HAP-1 (cell line): ENCODE measurements at regions of chr3 and their contacts with region 1.

Region 1: DNA sequence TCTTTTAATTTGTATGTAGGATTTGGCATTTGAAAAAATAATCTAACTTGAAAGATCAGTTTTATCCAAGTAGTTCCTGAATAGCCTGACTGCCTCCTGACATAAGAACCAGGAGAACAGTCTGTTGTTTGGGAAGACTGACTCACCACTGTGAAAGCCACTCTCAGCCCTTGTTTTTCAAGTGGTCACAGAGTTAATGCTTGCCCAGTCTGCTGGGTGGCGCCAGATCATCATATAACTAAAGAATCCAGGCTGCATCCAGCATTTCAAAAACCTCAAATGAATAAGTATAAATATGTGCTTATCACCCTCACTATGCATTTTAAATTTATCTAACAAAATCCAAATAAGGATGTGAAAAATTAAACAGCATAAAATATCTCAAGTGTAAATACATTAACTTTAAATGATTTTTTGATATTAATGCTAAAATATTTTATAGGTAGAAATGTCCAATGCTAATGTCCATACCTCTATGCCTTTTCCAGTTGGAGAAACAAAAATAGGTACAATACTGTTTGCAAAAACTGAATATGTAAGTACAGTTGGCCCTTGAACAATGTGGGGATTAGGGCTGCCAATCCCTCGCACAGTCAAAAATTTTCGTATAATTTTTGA is 26.9 kb upstream of the ZBBX start:
- DNase-seq: peak; percentile 39 to 62
- H3K4me3 ChIP-seq: no peak overlapping the region
- H3K4me1 ChIP-seq: no peaks in the 10 kb centered on the region
- H3K27me3 ChIP-seq: no peaks in the 10 kb centered on the region

Region 2: GRCh38 chr3:167188592-167188991 is 218.4 kb before region 1 on chr3:
- in situ Hi-C with region 1: no loop called
- DNase-seq: no peak
- H3K4me3 ChIP-seq: no peak overlapping the region
- H3K4me1 ChIP-seq: peaks cover 25% of the 10 kb centered on the region
- H3K27me3 ChIP-seq: no peaks in the 10 kb centered on the region

Region 3: DNA sequence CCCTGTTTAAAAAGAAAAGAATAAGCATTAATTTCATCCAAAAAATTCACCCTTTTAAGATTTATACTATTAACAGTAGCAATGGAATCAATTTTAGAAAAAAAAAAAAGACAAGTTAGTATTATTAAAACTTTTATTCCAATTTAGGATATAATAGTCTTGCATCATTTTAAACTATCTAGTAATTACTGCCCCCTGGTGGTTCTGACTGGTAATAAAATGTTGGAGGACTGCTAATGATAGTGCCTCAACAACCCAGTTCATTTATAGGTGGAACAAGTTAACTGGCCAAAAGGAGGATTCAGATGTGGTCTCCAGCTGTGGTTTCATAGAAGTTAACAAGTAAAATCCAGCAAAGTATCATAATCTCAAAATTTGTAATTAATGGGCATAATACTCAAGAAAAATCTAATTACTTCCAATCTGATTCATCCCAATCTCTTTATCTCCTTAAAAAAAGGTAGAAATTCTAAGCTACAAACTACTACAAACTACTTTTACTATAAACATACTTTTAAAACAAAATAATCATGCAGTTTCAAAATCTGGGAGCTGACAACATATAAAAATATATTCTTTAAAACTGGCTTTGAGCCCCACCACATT is 277.5 kb after region 1 on chr3:
- in situ Hi-C with region 1: loop called (anchors 10 kb)
- DNase-seq: peak; percentile 44 to 79
- H3K4me3 ChIP-seq: no peak overlapping the region
- H3K4me1 ChIP-seq: no peaks in the 10 kb centered on the region
- H3K27me3 ChIP-seq: no peaks in the 10 kb centered on the region

Region 4: DNA sequence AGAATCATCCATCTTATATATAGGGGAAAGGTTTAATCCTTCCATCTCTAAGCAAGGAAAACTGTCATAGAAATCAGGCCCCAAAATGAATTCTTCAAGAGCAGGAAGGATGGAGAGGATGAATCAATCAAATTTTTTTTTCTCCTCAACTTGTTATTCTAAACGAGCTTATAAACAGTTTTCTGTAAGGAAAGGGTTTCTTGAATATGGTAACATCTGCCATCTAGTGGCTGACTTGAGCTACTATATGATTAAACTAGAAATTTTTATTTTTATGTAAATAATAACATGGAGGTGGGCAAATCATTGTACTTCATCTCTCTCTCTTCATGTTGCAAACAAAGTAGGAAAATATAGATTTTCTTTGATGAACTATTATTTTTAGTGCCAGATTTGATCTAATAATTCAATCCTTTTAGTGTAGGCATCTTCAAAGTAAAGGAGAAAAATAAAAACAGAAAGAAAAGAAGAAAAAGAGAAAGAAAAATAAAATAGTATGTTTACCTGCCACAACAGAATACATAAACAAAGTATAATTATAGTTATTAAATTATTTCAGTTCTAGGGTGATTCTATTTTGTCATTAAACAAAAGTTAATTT is 475.2 kb after region 1 on chr3:
- in situ Hi-C with region 1: loop called (anchors 25 kb)
- DNase-seq: peak in 1 of 2 experiments; percentile 82
- H3K4me3 ChIP-seq: no peak overlapping the region
- H3K4me1 ChIP-seq: no peaks in the 10 kb centered on the region
- H3K27me3 ChIP-seq: peaks cover 17% of the 10 kb centered on the region

Region 5: DNA sequence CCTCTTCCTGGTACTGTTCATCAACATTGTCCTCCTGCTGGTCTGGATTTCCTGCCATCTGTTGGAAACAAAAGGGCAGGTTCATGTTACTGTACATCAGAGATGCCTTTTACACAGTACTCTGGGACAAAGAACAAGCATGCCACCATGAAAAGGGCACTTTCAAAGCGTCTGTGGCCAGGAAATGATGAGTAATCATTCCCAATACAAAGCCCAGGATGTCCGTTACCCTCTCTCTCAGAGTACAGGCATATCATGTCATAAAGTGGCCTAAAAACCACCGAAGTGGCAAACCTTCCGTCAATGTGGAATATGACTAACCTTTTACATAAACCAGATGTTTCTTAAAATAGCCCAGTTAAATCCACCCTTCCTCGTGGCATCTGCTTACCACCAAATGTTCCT is 617.6 kb after region 1 on chr3:
- in situ Hi-C with region 1: loop called (anchors 25 kb)
- DNase-seq: no peak
- H3K4me3 ChIP-seq: no peak overlapping the region
- H3K4me1 ChIP-seq: no peaks in the 10 kb centered on the region
- H3K27me3 ChIP-seq: no peaks in the 10 kb centered on the region